ENCODE measurements at regions of chr20 and their contacts with region 1.

Region 1: DNA sequence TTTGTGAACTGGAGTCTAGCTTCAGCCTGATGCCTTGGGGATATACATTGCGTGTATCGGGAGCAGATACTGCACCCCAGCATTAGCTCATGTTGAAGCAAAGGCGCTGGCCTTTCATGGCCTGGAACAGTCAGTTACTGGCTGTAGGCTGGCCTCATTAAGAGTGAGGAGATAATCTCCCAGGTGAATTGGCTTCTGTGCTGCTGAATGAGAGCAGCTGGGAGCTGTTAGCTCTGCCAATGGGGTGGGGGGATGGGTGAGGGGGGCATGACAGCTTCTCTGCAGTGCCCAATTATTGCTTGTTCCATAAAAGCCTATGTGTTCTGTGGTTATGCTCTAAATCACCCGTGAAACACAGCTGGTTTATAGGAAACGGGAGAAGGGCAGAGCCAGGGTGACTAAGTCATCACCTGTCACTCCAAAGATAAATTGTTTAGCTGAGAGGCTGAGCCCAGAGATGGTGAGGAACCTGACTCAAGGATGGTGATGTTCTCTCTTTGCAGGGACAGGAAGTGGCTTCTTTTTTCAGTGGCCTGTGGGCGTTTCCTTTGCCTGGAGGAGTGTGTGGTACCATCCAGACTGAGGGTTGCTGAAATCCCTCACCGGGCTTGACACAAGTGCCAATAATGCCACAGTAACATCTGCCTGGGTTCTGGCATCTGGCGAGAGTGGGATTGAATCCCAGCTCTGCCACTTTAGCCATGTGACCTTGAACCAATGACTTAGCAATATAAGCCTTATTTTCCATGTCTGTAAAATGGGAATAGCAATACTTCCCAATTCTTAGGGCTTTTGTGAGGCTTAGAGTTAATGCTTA is 170.8 kb downstream of the BCAS1 start:
- DNase-seq: peak; percentile 89
- ATAC-seq: peak; percentile 95
- H3K4me3 Mint-ChIP-seq: peak overlapping the region; percentile 35
- H3K27ac Mint-ChIP-seq: peak overlapping the region; percentile 92
- H3K4me1 Mint-ChIP-seq: peaks cover 79% of the 10 kb centered on the region
- H3K27me3 Mint-ChIP-seq: no peaks in the 10 kb centered on the region

Region 2: GRCh38 chr20:53883098-53883811 is 16.3 kb before region 1 on chr20:
- CTCF ChIA-PET with region 1: interaction called, 24 read pairs
- POLR2A ChIA-PET with region 1: interaction called, 22 read pairs
- DNase-seq: no peak
- ATAC-seq: no peak
- H3K4me3 Mint-ChIP-seq: peak overlapping the region; percentile 83
- H3K27ac Mint-ChIP-seq: peak overlapping the region; percentile 62
- H3K4me1 Mint-ChIP-seq: peaks cover 80% of the 10 kb centered on the region
- H3K27me3 Mint-ChIP-seq: no peaks in the 10 kb centered on the region

Measured in activated CD8-positive, alpha-beta T cell treated with anti-CD3 and anti-CD28 coated beads, Interleukin-2, amount 10 ng/mL, durations not matched to agents 7 days and 5 days (primary cell).